Aorta (tissue), 5 donors: ENCODE measurements at regions of chr5 and their contacts with region 1.

Region 1: DNA sequence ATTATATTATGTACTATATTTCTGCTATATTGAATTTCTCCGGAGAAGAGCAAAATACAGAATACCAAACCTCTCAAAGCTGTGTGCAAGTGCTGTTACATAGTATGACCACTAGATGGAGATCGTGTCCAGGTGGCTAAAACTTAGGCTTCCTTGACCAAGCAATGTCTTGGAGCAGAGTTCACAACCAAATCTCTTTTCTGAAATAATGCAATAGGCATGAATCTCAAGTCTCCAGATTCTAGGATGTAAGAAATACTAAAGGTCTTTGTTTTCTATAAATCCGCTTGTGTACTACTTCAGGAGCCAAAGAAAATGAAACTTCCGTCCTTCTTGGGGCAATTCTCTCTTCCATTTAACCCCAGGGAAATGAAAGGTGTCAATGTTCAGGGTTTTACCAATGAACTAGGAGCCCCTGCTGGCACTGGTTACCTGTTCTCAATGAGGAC is 181.5 kb upstream of the RAI14 start:
- DNase-seq: no peak
- ATAC-seq: peak; percentile 87
- H3K4me3 ChIP-seq: no peak overlapping the region
- H3K27ac ChIP-seq: no peak overlapping the region
- H3K4me1 ChIP-seq: no peaks in the 10 kb centered on the region
- H3K27me3 ChIP-seq: no peaks in the 10 kb centered on the region

Region 2: DNA sequence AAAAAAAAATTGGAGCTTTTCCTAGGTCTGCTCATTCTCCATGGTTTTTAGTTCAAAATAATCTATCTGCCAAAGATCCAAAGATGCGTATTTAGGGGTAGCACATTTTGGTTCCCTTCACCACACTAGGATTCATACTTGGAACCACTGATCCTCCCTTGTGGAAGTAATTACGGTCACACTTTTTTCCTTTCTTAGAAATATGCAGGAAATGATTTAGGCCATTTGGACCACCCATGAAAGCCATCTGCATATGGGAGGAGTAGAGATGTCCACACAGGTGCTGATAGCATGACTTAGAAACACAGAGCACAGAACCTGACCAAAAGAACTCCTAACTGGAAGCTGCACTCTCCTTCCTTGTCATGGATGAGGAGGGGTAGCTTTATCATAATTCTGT is 75.7 kb after region 1 on chr5:
- intact Hi-C with region 1: no loop called
- DNase-seq: no peak
- ATAC-seq: no peak
- H3K4me3 ChIP-seq: no peak overlapping the region
- H3K27ac ChIP-seq: no peak overlapping the region
- H3K4me1 ChIP-seq: peaks cover 0 to 3% of the 10 kb centered on the region in 2 donors
- H3K27me3 ChIP-seq: no peaks in the 10 kb centered on the region

Region 3: GRCh38 chr5:34608859-34609648 is 134.5 kb after region 1 on chr5:
- intact Hi-C with region 1: no loop called
- DNase-seq: no peak
- ATAC-seq: peak; percentile 75
- H3K4me3 ChIP-seq: no peak overlapping the region
- H3K27ac ChIP-seq: peak overlapping the region in 1 of 2 donors; percentile 51
- H3K4me1 ChIP-seq: peaks cover 3 to 9% of the 10 kb centered on the region in 2 donors
- H3K27me3 ChIP-seq: no peaks in the 10 kb centered on the region

Region 4: GRCh38 chr5:35003018-35003957 is 528.7 kb after region 1 on chr5:
- intact Hi-C with region 1: loop called (anchors 5 kb)
- DNase-seq: peak; percentile 53 to 76
- ATAC-seq: peak; percentile 73
- H3K4me3 ChIP-seq: no peak overlapping the region
- H3K27ac ChIP-seq: no peak overlapping the region
- H3K4me1 ChIP-seq: no peaks in the 10 kb centered on the region
- H3K27me3 ChIP-seq: no peaks in the 10 kb centered on the region

Region 5: DNA sequence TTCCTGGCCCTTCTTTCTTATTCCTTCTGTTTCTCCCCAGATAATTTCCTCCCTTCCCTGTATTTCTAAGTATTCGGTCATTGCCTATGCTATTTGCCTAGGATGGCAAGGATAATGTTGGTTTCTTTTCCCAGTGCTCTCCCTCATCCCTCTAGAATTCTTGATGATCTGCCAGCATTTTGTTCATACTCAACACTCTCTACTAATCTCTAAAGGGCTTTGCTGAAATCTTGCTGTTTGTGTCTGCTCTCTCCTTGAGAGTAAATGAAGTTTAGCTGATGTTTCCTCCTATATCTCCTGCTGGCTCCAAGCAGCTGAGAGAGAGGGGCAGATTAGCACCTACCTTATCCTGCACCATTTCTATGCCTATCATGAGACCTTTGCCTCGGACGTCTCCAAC is 535.1 kb after region 1 on chr5:
- intact Hi-C with region 1: loop called (anchors 5 kb)
- DNase-seq: no peak
- ATAC-seq: no peak
- H3K4me3 ChIP-seq: no peak overlapping the region
- H3K27ac ChIP-seq: no peak overlapping the region
- H3K4me1 ChIP-seq: no peaks in the 10 kb centered on the region
- H3K27me3 ChIP-seq: no peaks in the 10 kb centered on the region